Right lobe of liver (tissue), 6 donors: ENCODE measurements at regions of chr2 and their contacts with region 1.

Region 1: DNA sequence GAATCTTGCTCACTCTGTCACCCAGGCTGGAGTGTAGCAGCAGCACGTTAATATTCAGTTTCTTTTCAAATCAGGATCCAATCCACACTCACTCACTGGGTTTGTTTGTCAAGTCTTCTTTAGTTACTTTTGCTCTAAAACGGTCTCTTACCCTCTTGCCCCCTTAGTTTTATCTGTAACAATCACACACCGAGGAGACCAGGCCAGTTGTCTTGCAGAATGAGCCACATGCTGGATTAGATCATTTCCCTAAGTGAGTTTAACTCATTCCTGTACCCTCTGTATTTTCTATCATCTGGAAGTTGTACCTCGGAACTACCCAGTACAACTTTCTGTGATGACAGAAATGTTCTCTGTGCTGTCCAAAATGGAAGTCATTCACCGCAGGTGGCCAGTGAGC is 20.7 kb upstream of the TOGARAM2 start:
- DNase-seq: no peak
- ATAC-seq: no peak
- H3K4me3 ChIP-seq: no peak overlapping the region
- H3K27ac ChIP-seq: no peak overlapping the region
- H3K4me1 ChIP-seq: no peaks in the 10 kb centered on the region
- H3K27me3 ChIP-seq: no peaks in the 10 kb centered on the region
- CTCF ChIP-seq: no peak
- POLR2A ChIP-seq: no peak

Region 2: GRCh38 chr2:28583899-28584553 is 376.4 kb before region 1 on chr2:
- intact Hi-C with region 1: no loop called
- DNase-seq: peak in 1 of 3 donors; percentile 58
- ATAC-seq: peak; percentile 50 to 89 (median 64)
- H3K4me3 ChIP-seq: no peak overlapping the region
- H3K27ac ChIP-seq: no peak overlapping the region
- H3K4me1 ChIP-seq: no peaks in the 10 kb centered on the region
- H3K27me3 ChIP-seq: no peaks in the 10 kb centered on the region
- CTCF ChIP-seq: no peak
- POLR2A ChIP-seq: no peak

Region 3: DNA sequence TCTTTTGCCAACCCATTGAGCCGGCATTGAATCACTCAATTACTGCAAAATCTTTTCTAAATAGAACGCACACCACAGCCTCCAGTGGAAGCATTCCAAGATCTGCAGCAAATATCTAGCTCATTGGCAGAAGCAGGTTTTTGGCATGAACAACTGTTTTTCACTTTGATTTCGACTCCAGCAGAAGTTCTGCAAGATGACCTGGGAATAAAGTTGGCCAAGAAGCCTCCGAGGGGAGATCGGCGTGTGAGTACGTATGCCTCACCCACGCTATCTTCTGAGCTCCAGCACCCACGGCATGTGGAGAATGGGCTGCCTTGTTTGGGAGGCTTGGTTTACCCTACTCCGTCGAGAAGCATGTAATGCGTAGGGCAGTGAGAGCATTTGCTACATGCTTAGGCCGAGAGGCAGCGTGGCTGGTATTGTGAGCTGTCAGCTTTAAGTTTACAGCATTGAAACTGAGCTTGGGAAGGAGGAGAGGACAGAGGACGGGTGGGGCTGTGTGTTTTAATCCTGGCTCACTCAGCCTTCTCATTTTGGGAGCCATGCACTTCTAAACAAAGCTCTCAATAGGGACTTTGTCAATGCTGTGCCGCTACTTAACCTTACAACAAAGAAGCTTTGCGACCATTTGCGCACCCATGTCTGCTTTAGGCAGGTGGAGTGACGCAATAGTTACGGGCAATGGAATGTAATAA is 103.4 kb after region 1 on chr2:
- intact Hi-C with region 1: no loop called
- DNase-seq: no peak
- ATAC-seq: no peak
- H3K4me3 ChIP-seq: no peak overlapping the region
- H3K27ac ChIP-seq: no peak overlapping the region
- H3K4me1 ChIP-seq: no peaks in the 10 kb centered on the region
- H3K27me3 ChIP-seq: no peaks in the 10 kb centered on the region
- CTCF ChIP-seq: no peak
- POLR2A ChIP-seq: no peak

Region 4: GRCh38 chr2:29206941-29207340 is 246.5 kb after region 1 on chr2:
- intact Hi-C with region 1: loop called in 1 of 2 experiments (anchors 10 kb)
- DNase-seq: no peak
- ATAC-seq: no peak
- H3K4me3 ChIP-seq: no peak overlapping the region
- H3K27ac ChIP-seq: no peak overlapping the region
- H3K4me1 ChIP-seq: no peaks in the 10 kb centered on the region
- H3K27me3 ChIP-seq: no peaks in the 10 kb centered on the region
- CTCF ChIP-seq: no peak
- POLR2A ChIP-seq: no peak